Spleen (tissue), 13 donors: ENCODE measurements at regions of chr10 and their contacts with region 1.

Region 1: DNA sequence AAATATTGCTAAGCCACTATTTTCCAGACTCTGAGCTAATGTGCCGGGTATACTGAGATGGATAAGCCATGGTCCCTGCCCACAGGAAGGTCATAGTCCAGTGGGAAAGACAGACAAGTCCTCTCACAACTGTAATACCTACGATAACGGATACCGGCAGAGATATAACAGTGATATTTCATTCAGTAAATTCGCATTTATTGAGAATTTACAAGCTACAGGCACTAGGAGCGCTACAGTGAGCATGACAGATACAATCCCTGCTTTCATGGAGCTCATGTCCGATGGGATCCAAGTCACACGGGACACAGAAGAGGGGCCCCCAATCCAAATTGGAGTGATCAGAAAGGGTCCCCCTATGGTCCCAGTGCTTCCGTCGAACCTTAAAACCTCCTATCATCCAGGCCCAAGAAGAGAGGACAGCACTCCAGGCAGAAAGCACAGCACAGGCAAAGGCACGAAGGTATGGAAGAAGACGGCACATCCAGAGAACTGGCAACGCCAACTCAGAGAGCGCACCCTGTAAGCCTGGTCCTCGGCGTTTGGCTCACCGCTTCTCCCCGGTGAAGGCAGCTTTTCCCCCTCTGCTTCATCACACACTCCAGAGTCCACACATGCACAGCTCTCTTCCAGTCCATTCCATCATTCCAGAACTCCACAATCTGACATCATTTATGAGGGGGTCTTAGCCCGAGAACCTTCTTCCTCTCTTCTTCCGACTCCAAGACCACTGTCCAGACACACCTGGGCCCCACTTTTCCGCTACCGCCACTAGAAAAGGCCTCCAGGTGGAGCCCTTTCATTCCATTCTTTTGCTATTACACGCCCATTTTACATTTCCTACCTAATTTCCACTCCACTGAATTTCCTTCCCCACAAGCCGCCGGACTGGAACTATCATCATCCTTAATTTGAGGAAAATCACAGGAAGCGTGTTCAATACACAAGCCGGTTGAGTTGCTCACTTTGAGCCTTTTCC is 47.9 kb upstream of the NKX2-3 start:
- DNase-seq: no peak
- H3K4me3 ChIP-seq: no peak overlapping the region
- H3K27ac ChIP-seq: no peak overlapping the region
- H3K4me1 ChIP-seq: peaks cover 0 to 13% (median 6%) of the 10 kb centered on the region in 6 donors
- H3K27me3 ChIP-seq: peaks cover 0 to 19% (median 0%) of the 10 kb centered on the region in 7 donors
- CTCF ChIP-seq: peak in 9 of 11 experiments; percentile 15 to 55 (median 35)
- POLR2A ChIP-seq: no peak

Region 2: GRCh38 chr10:99548041-99548530 is 63.2 kb after region 1 on chr10:
- intact Hi-C with region 1: loop called (anchors 10 kb)
- DNase-seq: no peak
- H3K4me3 ChIP-seq: no peak overlapping the region
- H3K27ac ChIP-seq: no peak overlapping the region
- H3K4me1 ChIP-seq: peaks cover 0 to 5% (median 0%) of the 10 kb centered on the region in 6 donors
- H3K27me3 ChIP-seq: peaks cover 0 to 29% (median 0%) of the 10 kb centered on the region in 7 donors
- CTCF ChIP-seq: peak in 5 of 11 experiments; percentile 38 to 50 (median 39)
- POLR2A ChIP-seq: no peak

Region 3: DNA sequence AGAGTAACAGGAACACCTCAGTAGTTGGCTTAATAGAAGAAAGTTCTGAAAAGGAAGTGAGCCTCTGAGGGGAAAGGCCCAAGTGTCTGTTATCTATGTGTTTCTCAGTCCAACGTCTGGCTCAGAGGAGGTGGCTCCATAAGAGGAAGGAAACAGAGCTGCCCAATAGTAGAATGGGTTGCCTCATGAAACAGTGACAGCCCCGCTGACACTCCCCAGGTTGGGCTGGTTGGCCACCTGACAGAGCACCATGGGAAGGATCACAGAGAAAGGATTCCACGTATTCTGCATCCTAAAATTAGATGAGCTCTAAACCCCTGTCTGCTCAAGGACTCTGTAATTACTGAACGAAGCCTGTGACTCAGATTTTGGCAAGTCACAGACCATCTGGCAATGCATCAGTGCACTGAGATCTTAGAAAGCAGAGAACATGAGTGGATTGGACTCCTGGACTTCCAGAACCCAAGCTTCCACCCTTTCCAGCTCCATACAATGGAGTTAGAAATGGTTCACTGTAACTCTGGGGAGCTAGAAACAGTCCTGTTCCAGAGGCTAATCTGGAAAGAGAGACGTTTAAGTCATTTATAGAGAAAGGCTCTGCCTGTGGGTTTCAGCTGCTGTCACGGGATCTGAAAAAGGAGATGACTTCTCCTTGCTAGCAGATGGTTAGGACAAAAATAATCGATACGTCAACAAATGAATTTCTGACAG is 842.3 kb after region 1 on chr10:
- intact Hi-C with region 1: no loop called
- DNase-seq: peak; percentile 86
- H3K4me3 ChIP-seq: peak overlapping the region in 1 of 8 donors; percentile 7
- H3K27ac ChIP-seq: peak overlapping the region in 7 of 8 donors; percentile 61 to 78 (median 72)
- H3K4me1 ChIP-seq: peaks cover 0 to 20% (median 9%) of the 10 kb centered on the region in 6 donors
- H3K27me3 ChIP-seq: peaks cover 0 to 21% (median 0%) of the 10 kb centered on the region in 7 donors
- CTCF ChIP-seq: no peak
- POLR2A ChIP-seq: no peak